ENCODE measurements at regions of chr4 and their contacts with region 1.

Region 1: GRCh38 chr4:182938205-182938645 is 21.0 kb upstream of the DCTD start:
- DNase-seq: peak; percentile 77
- H3K4me3 Mint-ChIP-seq: no peak overlapping the region
- H3K27ac Mint-ChIP-seq: no peak overlapping the region
- H3K4me1 Mint-ChIP-seq: peaks cover 17% of the 10 kb centered on the region
- H3K27me3 Mint-ChIP-seq: peaks cover 19% of the 10 kb centered on the region
- CTCF ChIP-seq: peak; percentile 95

Region 2: GRCh38 chr4:182478475-182478874 is 459.8 kb before region 1 on chr4:
- CTCF ChIA-PET with region 1: no interaction called
- POLR2A ChIA-PET with region 1: no interaction called
- intact Hi-C with region 1: no loop called
- DNase-seq: peak; percentile 50
- H3K4me3 Mint-ChIP-seq: no peak overlapping the region
- H3K27ac Mint-ChIP-seq: no peak overlapping the region
- H3K4me1 Mint-ChIP-seq: no peaks in the 10 kb centered on the region
- H3K27me3 Mint-ChIP-seq: no peaks in the 10 kb centered on the region
- CTCF ChIP-seq: peak; percentile 57

Region 3: DNA sequence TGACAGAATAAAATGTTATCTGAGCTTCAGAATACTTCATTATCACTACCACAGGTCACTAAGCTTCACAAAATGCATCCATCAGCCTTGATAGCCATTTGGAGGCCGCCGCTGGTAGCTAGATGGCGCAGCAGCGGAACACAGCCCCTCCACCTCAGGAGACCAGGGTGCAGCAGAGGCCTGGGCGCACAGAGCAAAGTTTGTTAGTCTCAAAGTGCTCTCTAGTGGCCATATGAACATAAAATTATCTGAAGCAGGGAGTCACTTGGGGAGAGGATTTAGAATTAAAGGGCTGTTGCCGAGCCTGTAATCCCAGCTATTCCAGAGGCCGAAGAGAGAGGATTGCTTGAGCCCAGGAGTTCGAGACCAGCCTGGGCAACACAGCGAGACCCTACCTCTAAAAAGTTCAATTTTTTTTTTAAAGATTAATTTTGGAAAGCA is 12.9 kb before region 1 on chr4:
- CTCF ChIA-PET with region 1: interaction called, 55 read pairs
- POLR2A ChIA-PET with region 1: no interaction called
- intact Hi-C with region 1: no loop called
- DNase-seq: peak; percentile 45
- H3K4me3 Mint-ChIP-seq: no peak overlapping the region
- H3K27ac Mint-ChIP-seq: no peak overlapping the region
- H3K4me1 Mint-ChIP-seq: no peaks in the 10 kb centered on the region
- H3K27me3 Mint-ChIP-seq: no peaks in the 10 kb centered on the region
- CTCF ChIP-seq: peak; percentile 34

Region 4: GRCh38 chr4:183059797-183060196 is 121.6 kb after region 1 on chr4:
- CTCF ChIA-PET with region 1: interaction called, 12 read pairs
- POLR2A ChIA-PET with region 1: no interaction called
- intact Hi-C with region 1: no loop called
- DNase-seq: no peak
- H3K4me3 Mint-ChIP-seq: no peak overlapping the region
- H3K27ac Mint-ChIP-seq: no peak overlapping the region
- H3K4me1 Mint-ChIP-seq: no peaks in the 10 kb centered on the region
- H3K27me3 Mint-ChIP-seq: no peaks in the 10 kb centered on the region
- CTCF ChIP-seq: no peak

Region 5: DNA sequence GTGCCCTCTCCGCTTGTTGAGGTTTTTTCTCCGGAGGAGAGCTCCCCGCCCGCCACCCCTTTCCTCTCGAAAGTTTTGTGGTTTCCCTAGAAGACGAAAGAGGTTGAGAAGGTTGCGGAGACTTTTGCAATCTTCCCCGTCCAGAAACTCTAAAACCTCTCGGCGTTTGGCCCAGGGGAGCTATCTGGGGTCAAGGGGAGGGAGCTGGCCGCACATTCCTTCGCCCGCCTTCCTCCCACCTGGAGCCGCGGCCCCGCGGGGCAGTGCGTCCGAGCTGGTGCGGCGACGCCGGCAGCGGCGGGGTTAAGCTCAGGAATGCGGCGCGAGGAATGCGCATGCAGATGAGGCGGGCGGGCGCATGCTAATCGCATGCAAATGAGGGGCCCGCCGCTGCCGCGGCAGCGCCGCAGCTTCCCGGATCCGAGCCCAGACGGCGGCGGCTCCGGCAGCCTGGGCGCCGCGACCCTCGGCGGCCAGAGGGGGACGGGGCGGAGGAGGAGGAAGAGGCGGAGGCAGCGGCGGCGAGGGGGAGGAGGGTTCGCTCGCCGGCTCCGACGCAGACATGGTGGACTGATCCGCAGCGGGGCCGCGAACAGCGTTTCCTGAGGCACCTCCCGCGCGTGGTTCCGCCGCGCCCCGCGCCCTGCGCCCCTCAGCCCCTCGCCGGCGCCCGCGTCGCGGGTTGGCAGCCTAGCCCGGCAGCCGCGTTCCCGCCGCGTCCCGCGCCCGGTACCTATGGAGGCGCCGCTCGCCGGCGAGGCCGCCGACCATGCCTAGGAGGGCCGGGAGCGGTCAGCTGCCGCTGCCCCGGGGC is 160.7 kb after region 1 on chr4 and contains the start of gene WWC2:
- CTCF ChIA-PET with region 1: interaction called, 24 read pairs
- POLR2A ChIA-PET with region 1: interaction called, 3 read pairs
- intact Hi-C with region 1: no loop called
- DNase-seq: peak; percentile 92
- H3K4me3 Mint-ChIP-seq: peak within 1 kb of the TSS; percentile 78
- H3K27ac Mint-ChIP-seq: peak within 1 kb of the TSS; percentile 76
- H3K4me1 Mint-ChIP-seq: peaks cover 17% of the 10 kb centered on the region
- H3K27me3 Mint-ChIP-seq: no peaks in the 10 kb centered on the region
- CTCF ChIP-seq: no peak
- total RNA-seq, gene WWC2: 38.6 and 42.4 TPM in 2 replicates

Region 6: GRCh38 chr4:183261953-183262775 is 323.9 kb after region 1 on chr4:
- CTCF ChIA-PET with region 1: interaction called, 258 read pairs
- POLR2A ChIA-PET with region 1: interaction called, 16 read pairs
- intact Hi-C with region 1: loop called (anchors 1 kb)
- DNase-seq: peak; percentile 84
- H3K4me3 Mint-ChIP-seq: no peak overlapping the region
- H3K27ac Mint-ChIP-seq: peak overlapping the region; percentile 52
- H3K4me1 Mint-ChIP-seq: peaks cover 5% of the 10 kb centered on the region
- H3K27me3 Mint-ChIP-seq: no peaks in the 10 kb centered on the region
- CTCF ChIP-seq: peak; percentile 68

Region 7: DNA sequence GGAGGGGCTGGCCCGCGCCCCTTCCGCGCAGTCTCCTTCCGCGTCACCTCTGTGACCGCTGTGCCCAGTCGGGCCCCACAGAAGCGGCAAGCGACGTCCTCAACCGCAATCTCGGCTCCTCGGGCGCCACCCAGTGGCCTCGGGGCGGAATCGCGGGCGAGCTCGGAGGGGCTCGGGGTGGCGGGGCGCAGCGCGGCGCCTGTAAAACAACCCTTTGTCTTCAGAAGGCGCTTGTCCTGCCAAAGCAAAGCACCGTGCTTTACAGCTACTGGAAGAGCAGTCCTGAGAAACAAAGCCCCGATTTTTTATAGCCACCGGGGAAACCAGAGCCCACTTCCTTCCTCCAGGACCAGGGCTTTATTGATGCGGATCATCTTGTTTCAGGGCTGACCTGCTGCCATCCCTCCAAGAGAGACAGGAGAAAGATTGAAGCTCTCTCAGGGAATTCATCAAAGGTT is 468.9 kb after region 1 on chr4:
- CTCF ChIA-PET with region 1: interaction called, 6 read pairs
- POLR2A ChIA-PET with region 1: no interaction called
- intact Hi-C with region 1: loop called (anchors 2 kb)
- DNase-seq: peak; percentile 75
- H3K4me3 Mint-ChIP-seq: peak overlapping the region; percentile 38
- H3K27ac Mint-ChIP-seq: no peak overlapping the region
- H3K4me1 Mint-ChIP-seq: peaks cover 13% of the 10 kb centered on the region
- H3K27me3 Mint-ChIP-seq: no peaks in the 10 kb centered on the region
- CTCF ChIP-seq: peak; percentile 98

Region 8: GRCh38 chr4:183522821-183523220 is 584.6 kb after region 1 on chr4:
- CTCF ChIA-PET with region 1: no interaction called
- POLR2A ChIA-PET with region 1: no interaction called
- intact Hi-C with region 1: no loop called
- DNase-seq: no peak
- H3K4me3 Mint-ChIP-seq: no peak overlapping the region
- H3K27ac Mint-ChIP-seq: no peak overlapping the region
- H3K4me1 Mint-ChIP-seq: no peaks in the 10 kb centered on the region
- H3K27me3 Mint-ChIP-seq: peaks cover 11% of the 10 kb centered on the region
- CTCF ChIP-seq: no peak

Measured in MCF 10A (cell line).